ENCODE measurements at regions of chr1 and their contacts with region 1.

Region 1: DNA sequence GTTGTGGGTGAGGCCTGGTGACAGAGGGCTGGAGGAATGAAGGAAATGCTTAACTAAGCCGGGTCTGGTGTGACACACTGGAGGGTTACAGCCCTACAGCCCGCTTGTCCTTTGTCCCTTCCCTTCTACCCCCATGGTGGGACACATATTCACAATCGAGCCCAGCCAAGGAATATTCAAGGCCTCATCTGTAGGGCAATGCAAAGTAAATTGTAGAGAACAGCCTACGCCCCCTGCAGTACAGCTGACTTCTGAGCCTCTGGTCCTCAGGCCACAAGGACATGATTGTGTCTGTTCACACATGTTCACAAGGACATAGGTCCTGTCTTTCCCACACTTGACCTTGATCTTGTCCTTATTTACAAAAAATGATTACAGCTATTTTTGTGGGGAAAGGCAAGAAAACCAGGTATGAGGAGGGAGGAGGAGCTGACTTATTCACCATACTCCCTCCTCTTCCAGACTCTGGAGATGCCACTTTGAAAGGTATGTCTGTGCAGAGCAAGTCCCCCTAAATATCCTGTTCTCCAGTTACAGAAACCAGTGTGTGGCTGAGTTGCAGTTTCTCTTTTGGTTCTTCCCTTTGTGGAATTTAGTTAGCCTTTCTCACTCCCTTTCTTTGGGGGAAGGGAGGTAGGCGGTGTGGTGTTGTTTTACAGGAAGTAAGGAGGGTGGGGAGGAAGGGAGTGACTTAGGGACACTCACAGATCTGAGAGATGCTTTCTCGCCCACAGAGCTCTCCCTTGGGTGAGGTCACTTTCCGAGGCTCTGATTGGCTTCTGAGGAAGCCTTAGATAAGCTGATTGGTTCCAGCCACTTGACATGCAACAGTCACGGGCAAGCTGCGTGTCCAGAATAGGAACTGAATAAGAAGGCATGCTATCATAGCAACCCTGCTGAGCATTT is 14.6 kb downstream of the POLR3GL start:
- DNase-seq: peak; percentile 93
- H3K4me3 Mint-ChIP-seq: no peak overlapping the region
- H3K27ac Mint-ChIP-seq: no peak overlapping the region
- H3K4me1 Mint-ChIP-seq: peaks cover 5% of the 10 kb centered on the region
- H3K27me3 Mint-ChIP-seq: no peaks in the 10 kb centered on the region

Region 2: DNA sequence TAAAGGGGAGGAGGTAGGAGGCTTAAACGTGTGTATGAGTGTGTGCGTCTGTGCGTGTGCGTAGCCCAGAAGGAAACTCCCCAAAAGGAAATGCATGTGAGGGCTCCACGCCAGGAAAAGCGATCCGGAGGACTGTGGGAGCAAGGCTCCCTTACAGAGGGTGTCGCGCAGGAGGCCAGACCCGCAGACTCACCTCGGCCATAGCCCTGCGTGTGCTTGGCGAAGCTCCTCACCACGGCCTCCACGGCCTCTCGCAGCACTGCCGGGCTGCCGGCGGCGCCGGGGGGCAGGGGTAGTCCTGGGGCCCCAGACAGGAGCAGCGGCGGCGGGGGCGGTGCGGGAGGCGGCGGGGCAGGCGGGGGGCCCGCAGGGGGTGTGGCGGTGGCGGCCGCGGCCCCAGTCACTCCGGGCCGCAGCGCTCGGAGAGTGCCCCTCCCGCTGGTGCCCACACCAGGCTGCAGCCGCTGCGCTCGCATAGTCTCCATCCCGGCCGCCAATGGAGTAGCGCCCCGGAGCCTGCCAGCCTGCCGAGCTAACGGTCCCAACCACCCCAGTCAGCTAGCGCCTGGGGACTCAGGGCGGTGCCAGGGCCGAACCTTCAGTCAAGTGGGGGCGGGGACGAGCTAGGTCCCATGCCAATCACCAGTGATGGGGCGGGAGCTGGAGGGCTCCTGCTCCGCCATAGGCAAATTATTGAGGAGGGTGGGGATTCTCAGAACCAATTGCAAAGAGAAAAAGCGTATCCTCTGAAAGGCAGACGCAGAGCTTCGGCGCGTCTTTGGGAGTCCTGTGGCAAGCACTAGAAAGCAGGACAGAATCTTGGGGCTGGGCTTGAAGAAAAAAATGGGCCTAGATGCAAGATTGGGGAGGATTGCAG is 21.4 kb before region 1 on chr1 and contains the start of gene LIX1L:
- CTCF ChIA-PET with region 1: interaction called, 44 read pairs
- intact Hi-C with region 1: no loop called
- DNase-seq: peak; percentile 98
- H3K4me3 Mint-ChIP-seq: peak within 1 kb of the TSS; percentile 83
- H3K27ac Mint-ChIP-seq: peak within 1 kb of the TSS; percentile 83
- H3K4me1 Mint-ChIP-seq: peaks cover 56% of the 10 kb centered on the region
- H3K27me3 Mint-ChIP-seq: no peaks in the 10 kb centered on the region
- total RNA-seq, gene LIX1L: 43.6 to 44.3 TPM

Region 3: GRCh38 chr1:145996433-145997015 is 17.4 kb after region 1 on chr1 and contains the start of gene TXNIP:
- CTCF ChIA-PET with region 1: interaction called, 109 read pairs
- intact Hi-C with region 1: loop called (anchors 1 kb)
- DNase-seq: peak; percentile 97
- H3K4me3 Mint-ChIP-seq: peak within 1 kb of the TSS; percentile 88
- H3K27ac Mint-ChIP-seq: peak within 1 kb of the TSS; percentile 97
- H3K4me1 Mint-ChIP-seq: peaks cover 61% of the 10 kb centered on the region
- H3K27me3 Mint-ChIP-seq: no peaks in the 10 kb centered on the region
- total RNA-seq, gene TXNIP: 86.0 to 91.1 TPM

Region 4: GRCh38 chr1:146007506-146008133 is 28.5 kb after region 1 on chr1:
- CTCF ChIA-PET with region 1: interaction called, 230 read pairs
- intact Hi-C with region 1: loop called (anchors 1 kb)
- DNase-seq: no peak
- H3K4me3 Mint-ChIP-seq: no peak overlapping the region
- H3K27ac Mint-ChIP-seq: peak overlapping the region; percentile 93
- H3K4me1 Mint-ChIP-seq: peaks cover 38% of the 10 kb centered on the region
- H3K27me3 Mint-ChIP-seq: no peaks in the 10 kb centered on the region

Region 5: DNA sequence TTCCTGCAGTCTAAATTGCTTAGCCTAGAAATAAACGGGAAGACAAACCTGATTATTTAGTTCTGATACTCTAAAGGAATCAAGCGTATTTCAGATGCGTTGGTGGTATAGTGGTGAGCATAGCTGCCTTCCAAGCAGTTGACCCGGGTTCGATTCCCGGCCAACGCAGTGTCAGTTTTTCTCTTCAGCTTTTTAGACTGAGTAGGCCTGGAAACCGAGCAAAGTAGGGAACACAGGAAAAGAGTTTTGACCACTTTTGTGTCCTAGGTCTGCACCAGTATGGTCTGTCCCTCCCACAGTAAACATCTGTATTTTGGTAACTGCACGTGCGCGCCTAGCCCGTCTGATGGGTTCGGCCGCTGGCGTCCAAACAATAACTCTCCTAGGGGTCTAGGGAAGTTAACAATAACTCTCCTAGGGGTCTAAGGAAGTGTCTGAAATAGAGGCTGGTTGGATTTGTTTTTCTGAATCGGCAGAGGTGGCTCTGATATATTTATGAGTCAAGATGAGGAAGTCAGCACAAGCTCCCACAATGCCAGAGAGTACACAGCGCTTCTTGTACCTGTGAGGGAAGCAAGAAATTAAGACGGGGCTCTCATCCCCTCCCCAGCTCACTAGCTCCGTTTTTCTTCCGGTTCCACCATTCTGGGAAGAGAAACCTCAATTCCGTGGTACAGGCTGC is 58.0 kb after region 1 on chr1:
- CTCF ChIA-PET with region 1: interaction called, 6 read pairs
- intact Hi-C with region 1: loop called (anchors 1 kb)
- DNase-seq: peak; percentile 89
- H3K4me3 Mint-ChIP-seq: peak overlapping the region; percentile 99
- H3K27ac Mint-ChIP-seq: peak overlapping the region; percentile 99
- H3K4me1 Mint-ChIP-seq: peaks cover 37% of the 10 kb centered on the region
- H3K27me3 Mint-ChIP-seq: peaks cover 9% of the 10 kb centered on the region

Measured in activated naive CD4-positive, alpha-beta T cell treated with anti-CD3 and anti-CD28 coated beads for 36 hours (primary cell).